ENCODE measurements at regions of chr17 and their contacts with region 1.

Region 1: DNA sequence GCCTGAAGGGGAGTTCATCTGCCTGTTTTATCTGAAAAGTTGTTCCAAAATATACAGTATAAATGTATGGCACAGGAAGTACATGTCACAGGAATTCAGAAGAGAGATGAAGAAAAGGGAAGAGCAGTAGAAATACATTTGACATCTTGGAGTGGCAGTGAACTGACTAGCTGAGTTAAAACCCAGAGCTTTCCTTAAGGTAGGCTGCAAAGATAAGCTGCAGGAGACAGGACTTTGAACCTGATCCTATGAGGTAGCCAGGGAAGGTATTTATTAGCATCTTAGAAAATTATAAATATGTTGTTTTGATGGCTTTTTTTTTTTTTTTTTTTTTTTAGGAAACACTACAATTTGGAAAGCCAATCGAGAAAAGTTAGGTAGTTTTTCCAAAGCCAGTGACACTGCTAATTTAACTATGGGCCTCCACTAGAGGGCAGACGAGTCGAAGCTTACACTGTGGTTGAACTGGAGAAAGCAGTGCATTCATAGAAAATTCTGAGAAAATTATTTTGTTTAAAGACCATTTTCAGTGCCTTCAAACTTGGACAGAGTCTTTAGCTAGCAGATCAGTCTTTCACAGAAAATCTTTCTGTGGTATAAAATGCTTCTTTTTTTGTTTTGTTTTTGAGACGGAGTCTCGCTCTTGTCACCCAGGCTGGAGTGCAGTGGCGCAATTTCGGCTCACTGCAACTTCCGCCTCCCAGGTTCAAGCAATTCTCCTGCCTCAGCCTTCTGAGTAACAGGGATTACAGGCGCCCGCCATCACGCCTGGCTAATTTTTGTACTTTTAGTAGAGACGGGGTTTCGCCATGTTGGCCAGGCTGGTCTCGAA is 122.3 kb downstream of the SSH2 start:
- DNase-seq: peak; percentile 71 to 76 (median 75)
- ATAC-seq: peak; percentile 73
- H3K4me3 ChIP-seq: no peak overlapping the region
- H3K27ac ChIP-seq: no peak overlapping the region
- H3K4me1 ChIP-seq: no peaks in the 10 kb centered on the region
- H3K27me3 ChIP-seq: no peaks in the 10 kb centered on the region
- CTCF ChIP-seq: peak in 6 of 7 experiments; percentile 61 to 87 (median 78)
- POLR2A ChIP-seq: no peak

Region 2: DNA sequence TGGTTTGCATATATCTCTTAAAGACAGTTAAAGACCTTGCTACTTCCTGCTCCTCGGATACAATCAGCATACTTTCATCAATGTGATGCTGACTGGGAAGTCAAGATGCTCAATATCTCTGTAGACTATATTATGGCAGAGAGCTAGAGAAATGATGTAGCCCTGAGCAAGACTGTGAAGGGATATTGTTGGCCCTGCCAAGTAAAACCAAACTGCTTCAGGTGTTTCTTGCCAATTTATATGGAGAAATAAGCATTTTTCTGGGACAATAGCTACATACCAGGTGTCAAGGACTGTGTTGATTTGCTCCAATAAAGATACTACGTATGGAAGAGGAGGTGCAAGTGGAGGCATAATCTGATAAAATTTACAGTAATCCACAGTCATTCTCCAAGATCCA is 129.0 kb after region 1 on chr17:
- intact Hi-C with region 1: loop called (anchors 5 kb)
- DNase-seq: no peak
- ATAC-seq: no peak
- H3K4me3 ChIP-seq: no peak overlapping the region
- H3K27ac ChIP-seq: no peak overlapping the region
- H3K4me1 ChIP-seq: peaks cover 3% of the 10 kb centered on the region
- H3K27me3 ChIP-seq: no peaks in the 10 kb centered on the region
- CTCF ChIP-seq: no peak
- POLR2A ChIP-seq: no peak

Region 3: GRCh38 chr17:30021708-30022317 is 214.1 kb after region 1 on chr17:
- intact Hi-C with region 1: loop called (anchors 10 kb)
- DNase-seq: peak; percentile 20 to 60 (median 42)
- ATAC-seq: no peak
- H3K4me3 ChIP-seq: no peak overlapping the region
- H3K27ac ChIP-seq: no peak overlapping the region
- H3K4me1 ChIP-seq: no peaks in the 10 kb centered on the region
- H3K27me3 ChIP-seq: no peaks in the 10 kb centered on the region
- CTCF ChIP-seq: peak; percentile 49 to 80 (median 66)
- POLR2A ChIP-seq: no peak

Measured in body of pancreas (tissue), 4 donors.